ENCODE measurements at regions of chr1 and their contacts with region 1.

Region 1: DNA sequence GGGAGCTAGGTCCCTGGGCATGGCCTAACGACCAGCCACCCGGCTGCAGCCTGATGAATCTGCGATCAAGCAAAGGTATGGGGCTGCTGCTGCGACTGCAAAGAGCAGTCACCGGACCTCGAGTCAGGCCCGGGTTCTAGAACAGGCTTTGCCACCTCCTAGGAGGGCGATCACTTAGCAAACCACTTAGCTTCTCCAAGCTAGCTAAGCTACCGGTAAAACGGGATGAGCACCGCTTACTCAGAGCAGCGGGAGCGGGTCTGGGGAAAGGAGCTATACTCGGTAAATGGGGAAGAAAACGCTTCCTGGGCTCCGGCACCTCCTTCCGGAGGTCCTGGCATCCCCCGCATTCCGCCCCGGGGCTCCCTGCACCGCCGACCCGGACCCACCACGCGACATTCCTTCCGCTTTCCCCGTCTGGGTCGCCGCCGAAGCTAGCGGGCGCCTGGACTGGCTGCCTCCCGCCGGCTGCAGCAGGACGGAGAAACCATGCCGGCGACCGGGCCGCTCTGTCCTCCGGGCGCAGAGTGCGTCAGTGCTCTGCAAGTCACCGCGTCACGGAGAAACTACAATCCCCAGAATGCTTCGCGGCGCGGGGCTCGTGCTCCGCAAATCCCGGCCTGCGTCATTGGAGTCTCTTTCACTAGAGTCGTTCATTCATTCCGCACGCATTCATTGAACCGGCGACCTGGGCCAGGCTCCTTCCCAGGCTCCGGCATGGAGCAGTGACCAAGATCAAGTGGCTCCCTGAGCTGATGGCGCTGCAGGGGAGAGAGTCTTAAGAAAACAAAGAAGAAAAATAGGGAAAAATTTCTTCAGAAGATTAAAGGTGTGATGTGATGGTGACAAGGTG is at the start of gene LSM10:
- DNase-seq: peak; percentile 88 to 98 (median 92)
- ATAC-seq: peak; percentile 89
- H3K4me3 ChIP-seq: peak within 1 kb of the TSS; percentile 71
- H3K27ac ChIP-seq: peak within 1 kb of the TSS; percentile 89
- H3K4me1 ChIP-seq: peaks cover 24 to 45% of the 10 kb centered on the region in 2 experiments
- H3K27me3 ChIP-seq: no peaks in the 10 kb centered on the region
- CTCF ChIP-seq: 0 out of 6 replicates have a peak, but pooled peaks of 1 of the 3 experiments have one; percentile 1
- EP300 ChIP-seq: no peak
- POLR2A ChIP-seq: peak; percentile 98
- RAD21 ChIP-seq: peak in 1 of 2 experiments; percentile 34; a peak in 3 of 4 replicates
- polyA plus RNA-seq, gene LSM10: 34.8 to 56.9 TPM

Region 2: GRCh38 chr1:35691080-35691479 is 706.5 kb before region 1 on chr1:
- CTCF ChIA-PET with region 1: no interaction called
- POLR2A ChIA-PET with region 1: no interaction called
- in situ Hi-C with region 1: no loop called
- intact Hi-C with region 1: no loop called
- DNase-seq: no peak
- ATAC-seq: no peak; the same call in 2 of the 3 replicates
- H3K4me3 ChIP-seq: no peak overlapping the region
- H3K27ac ChIP-seq: no peak overlapping the region
- H3K4me1 ChIP-seq: peaks cover 0 to 4% of the 10 kb centered on the region in 2 experiments; a peak in 2 of 5 replicates
- H3K27me3 ChIP-seq: peaks cover 46 to 58% of the 10 kb centered on the region in 2 experiments
- CTCF ChIP-seq: no peak
- EP300 ChIP-seq: no peak
- POLR2A ChIP-seq: no peak
- RAD21 ChIP-seq: no peak

Region 3: GRCh38 chr1:36411674-36412520 is 14.3 kb after region 1 on chr1:
- CTCF ChIA-PET with region 1: no interaction called
- POLR2A ChIA-PET with region 1: interaction called, 12 read pairs
- in situ Hi-C with region 1: no loop called
- intact Hi-C with region 1: no loop called
- DNase-seq: peak; percentile 60 to 88 (median 73)
- ATAC-seq: peak; percentile 99
- H3K4me3 ChIP-seq: no peak overlapping the region
- H3K27ac ChIP-seq: peak overlapping the region; percentile 22; the same call in 2 of the 3 replicates
- H3K4me1 ChIP-seq: peaks cover 7 to 8% of the 10 kb centered on the region in 2 experiments; a peak in 3 of 5 replicates
- H3K27me3 ChIP-seq: no peaks in the 10 kb centered on the region
- CTCF ChIP-seq: peak in 2 of 3 experiments; percentile 6 to 29; a peak in 1 of 6 replicates
- EP300 ChIP-seq: no peak
- POLR2A ChIP-seq: peak; percentile 51
- RAD21 ChIP-seq: peak in 1 of 2 experiments; percentile 23; a peak in 2 of 4 replicates